ENCODE measurements at regions of chr15 and their contacts with region 1.

Region 1: GRCh38 chr15:39756806-39757522 is 25.7 kb downstream of the FSIP1 start:
- DNase-seq: peak; percentile 47
- ATAC-seq: peak; percentile 40; the same call in 1 of the 2 replicates
- H3K4me3 ChIP-seq: no peak overlapping the region
- H3K27ac ChIP-seq: no peak overlapping the region
- H3K4me1 ChIP-seq: no peaks in the 10 kb centered on the region
- H3K27me3 ChIP-seq: no peaks in the 10 kb centered on the region
- CTCF ChIP-seq: peak; percentile 54 to 71 (median 68); a peak in 5 of 6 replicates
- POLR2A ChIP-seq: no peak
- RAD21 ChIP-seq: peak; percentile 62

Region 2: GRCh38 chr15:38699633-38700230 is 1057.2 kb before region 1 on chr15:
- CTCF ChIA-PET with region 1: interaction called, 14 read pairs
- POLR2A ChIA-PET with region 1: no interaction called
- RAD21 ChIA-PET with region 1: no interaction called
- intact Hi-C with region 1: no loop called
- DNase-seq: peak; percentile 54
- ATAC-seq: peak; percentile 89
- H3K4me3 ChIP-seq: no peak overlapping the region
- H3K27ac ChIP-seq: no peak overlapping the region
- H3K4me1 ChIP-seq: peaks cover 3 to 10% of the 10 kb centered on the region in 2 experiments; a peak in 1 of 4 replicates
- H3K27me3 ChIP-seq: no peaks in the 10 kb centered on the region
- CTCF ChIP-seq: peak; percentile 37 to 93 (median 92); a peak in 5 of 6 replicates
- POLR2A ChIP-seq: no peak
- RAD21 ChIP-seq: peak; percentile 51

Region 3: GRCh38 chr15:38817427-38818156 is 939.4 kb before region 1 on chr15:
- CTCF ChIA-PET with region 1: interaction called, 4 read pairs
- POLR2A ChIA-PET with region 1: no interaction called
- RAD21 ChIA-PET with region 1: no interaction called
- intact Hi-C with region 1: loop called (anchors 5 kb)
- DNase-seq: peak; percentile 65
- ATAC-seq: peak; percentile 100
- H3K4me3 ChIP-seq: no peak overlapping the region
- H3K27ac ChIP-seq: no peak overlapping the region
- H3K4me1 ChIP-seq: no peaks in the 10 kb centered on the region; a peak in 1 of 4 replicates
- H3K27me3 ChIP-seq: no peaks in the 10 kb centered on the region; the same call in 1 of the 2 replicates
- CTCF ChIP-seq: peak; percentile 98 to 100 (median 100)
- POLR2A ChIP-seq: no peak
- RAD21 ChIP-seq: peak; percentile 83

Region 4: DNA sequence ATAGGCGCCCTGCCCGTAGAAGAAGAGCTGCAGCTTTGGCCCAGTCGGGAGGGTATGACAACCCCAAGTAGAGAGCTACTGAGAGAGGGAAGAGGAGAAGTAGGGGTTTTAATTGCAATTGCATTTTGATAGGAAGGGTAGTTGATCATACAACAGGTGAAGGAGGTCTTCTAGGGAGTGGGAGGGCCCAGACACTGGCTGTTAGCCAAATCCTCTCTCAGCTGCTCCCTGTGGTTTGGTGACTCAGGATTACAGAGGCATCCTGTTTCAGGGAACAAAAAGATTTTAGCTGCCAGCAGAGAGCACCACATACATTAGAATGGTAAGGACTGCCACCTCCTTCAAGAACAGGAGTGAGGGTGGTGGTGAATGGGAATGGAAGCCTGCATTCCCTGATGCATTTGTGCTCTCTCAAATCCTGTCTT is 585.0 kb before region 1 on chr15:
- CTCF ChIA-PET with region 1: interaction called, 25 read pairs
- POLR2A ChIA-PET with region 1: no interaction called
- RAD21 ChIA-PET with region 1: interaction called, 3 to 5 read pairs
- intact Hi-C with region 1: loop called (anchors 2 kb)
- DNase-seq: peak; percentile 82
- ATAC-seq: peak; percentile 99
- H3K4me3 ChIP-seq: no peak overlapping the region
- H3K27ac ChIP-seq: no peak overlapping the region
- H3K4me1 ChIP-seq: peaks cover 7 to 16% of the 10 kb centered on the region in 2 experiments; a peak in 3 of 4 replicates
- H3K27me3 ChIP-seq: no peaks in the 10 kb centered on the region
- CTCF ChIP-seq: peak; percentile 41 to 64 (median 62); a peak in 4 of 6 replicates
- POLR2A ChIP-seq: no peak
- RAD21 ChIP-seq: peak; percentile 86

Region 5: GRCh38 chr15:39273717-39274411 is 483.1 kb before region 1 on chr15:
- CTCF ChIA-PET with region 1: no interaction called
- POLR2A ChIA-PET with region 1: no interaction called
- RAD21 ChIA-PET with region 1: no interaction called
- intact Hi-C with region 1: no loop called
- DNase-seq: no peak
- ATAC-seq: no peak
- H3K4me3 ChIP-seq: no peak overlapping the region
- H3K27ac ChIP-seq: no peak overlapping the region
- H3K4me1 ChIP-seq: peaks cover 0 to 2% of the 10 kb centered on the region in 2 experiments; a peak in 1 of 4 replicates
- H3K27me3 ChIP-seq: no peaks in the 10 kb centered on the region
- CTCF ChIP-seq: no peak
- POLR2A ChIP-seq: no peak
- RAD21 ChIP-seq: no peak

Region 6: GRCh38 chr15:39602143-39602542 is 154.8 kb before region 1 on chr15:
- CTCF ChIA-PET with region 1: interaction called, 32 read pairs
- POLR2A ChIA-PET with region 1: no interaction called
- RAD21 ChIA-PET with region 1: interaction called in 1 of 2 experiments, 3 read pairs
- intact Hi-C with region 1: loop called (anchors 5 kb)
- DNase-seq: no peak
- ATAC-seq: peak; percentile 67
- H3K4me3 ChIP-seq: no peak overlapping the region
- H3K27ac ChIP-seq: no peak overlapping the region
- H3K4me1 ChIP-seq: no peaks in the 10 kb centered on the region
- H3K27me3 ChIP-seq: no peaks in the 10 kb centered on the region
- CTCF ChIP-seq: peak in 2 of 3 experiments; percentile 47 to 61; a peak in 4 of 6 replicates
- POLR2A ChIP-seq: no peak
- RAD21 ChIP-seq: peak; percentile 23; the same call in 1 of the 2 replicates

Region 7: GRCh38 chr15:39680868-39681267 is 76.1 kb before region 1 on chr15:
- CTCF ChIA-PET with region 1: interaction called, 91 read pairs
- POLR2A ChIA-PET with region 1: no interaction called
- RAD21 ChIA-PET with region 1: interaction called, 6 to 14 read pairs
- intact Hi-C with region 1: loop called (anchors 1 kb)
- DNase-seq: no peak
- ATAC-seq: no peak
- H3K4me3 ChIP-seq: no peak overlapping the region
- H3K27ac ChIP-seq: no peak overlapping the region
- H3K4me1 ChIP-seq: no peaks in the 10 kb centered on the region
- H3K27me3 ChIP-seq: no peaks in the 10 kb centered on the region
- CTCF ChIP-seq: no peak
- POLR2A ChIP-seq: no peak
- RAD21 ChIP-seq: no peak

Region 8: DNA sequence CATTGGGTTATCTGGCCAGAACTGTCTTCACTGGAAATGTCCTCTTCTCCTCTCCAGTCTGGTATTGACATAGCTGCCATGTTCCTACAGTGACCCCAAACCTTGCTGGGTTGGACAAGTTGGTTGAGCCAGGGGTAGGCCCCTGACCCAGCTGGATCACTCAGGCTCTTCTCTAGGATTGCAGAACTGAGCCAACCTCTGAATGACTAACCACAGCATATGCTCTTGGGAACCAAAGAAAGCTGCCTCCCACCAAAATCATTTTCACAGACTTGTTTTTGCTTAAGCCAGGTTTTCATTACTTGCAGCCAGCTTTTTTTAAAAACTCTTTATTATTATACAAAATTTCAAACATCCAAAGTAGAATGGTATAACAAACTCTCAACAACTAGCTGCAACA is 15.7 kb before region 1 on chr15:
- CTCF ChIA-PET with region 1: interaction called, 20 read pairs
- POLR2A ChIA-PET with region 1: no interaction called
- RAD21 ChIA-PET with region 1: no interaction called
- intact Hi-C with region 1: no loop called
- DNase-seq: no peak
- ATAC-seq: no peak
- H3K4me3 ChIP-seq: no peak overlapping the region
- H3K27ac ChIP-seq: no peak overlapping the region
- H3K4me1 ChIP-seq: no peaks in the 10 kb centered on the region
- H3K27me3 ChIP-seq: no peaks in the 10 kb centered on the region
- CTCF ChIP-seq: no peak
- POLR2A ChIP-seq: no peak
- RAD21 ChIP-seq: no peak